ENCODE measurements at regions of chr6 and their contacts with region 1.

Region 1: GRCh38 chr6:36780442-36781177 is 58.6 kb downstream of the CPNE5 start:
- DNase-seq: no peak
- H3K4me3 ChIP-seq: no peak overlapping the region
- H3K4me3 Mint-ChIP-seq: no peak overlapping the region
- H3K27ac ChIP-seq: no peak overlapping the region
- H3K27ac Mint-ChIP-seq: peak overlapping the region in 1 of 7 donors; percentile 31
- H3K4me1 ChIP-seq: no peaks in the 10 kb centered on the region
- H3K4me1 Mint-ChIP-seq: peaks cover 0 to 4% (median 3%) of the 10 kb centered on the region in 4 donors
- H3K27me3 ChIP-seq: no peaks in the 10 kb centered on the region
- H3K27me3 Mint-ChIP-seq: no peaks in the 10 kb centered on the region

Region 2: GRCh38 chr6:36268478-36269275 is 511.9 kb before region 1 on chr6:
- CTCF ChIA-PET with region 1: no interaction called
- POLR2A ChIA-PET with region 1: no interaction called
- intact Hi-C with region 1: no loop called
- DNase-seq: no peak
- H3K4me3 ChIP-seq: no peak overlapping the region
- H3K4me3 Mint-ChIP-seq: no peak overlapping the region
- H3K27ac ChIP-seq: no peak overlapping the region
- H3K27ac Mint-ChIP-seq: peak overlapping the region in 1 of 7 donors; percentile 1
- H3K4me1 ChIP-seq: no peaks in the 10 kb centered on the region
- H3K4me1 Mint-ChIP-seq: no peaks in the 10 kb centered on the region
- H3K27me3 ChIP-seq: no peaks in the 10 kb centered on the region
- H3K27me3 Mint-ChIP-seq: peaks cover 4 to 20% of the 10 kb centered on the region in 2 donors

Region 3: DNA sequence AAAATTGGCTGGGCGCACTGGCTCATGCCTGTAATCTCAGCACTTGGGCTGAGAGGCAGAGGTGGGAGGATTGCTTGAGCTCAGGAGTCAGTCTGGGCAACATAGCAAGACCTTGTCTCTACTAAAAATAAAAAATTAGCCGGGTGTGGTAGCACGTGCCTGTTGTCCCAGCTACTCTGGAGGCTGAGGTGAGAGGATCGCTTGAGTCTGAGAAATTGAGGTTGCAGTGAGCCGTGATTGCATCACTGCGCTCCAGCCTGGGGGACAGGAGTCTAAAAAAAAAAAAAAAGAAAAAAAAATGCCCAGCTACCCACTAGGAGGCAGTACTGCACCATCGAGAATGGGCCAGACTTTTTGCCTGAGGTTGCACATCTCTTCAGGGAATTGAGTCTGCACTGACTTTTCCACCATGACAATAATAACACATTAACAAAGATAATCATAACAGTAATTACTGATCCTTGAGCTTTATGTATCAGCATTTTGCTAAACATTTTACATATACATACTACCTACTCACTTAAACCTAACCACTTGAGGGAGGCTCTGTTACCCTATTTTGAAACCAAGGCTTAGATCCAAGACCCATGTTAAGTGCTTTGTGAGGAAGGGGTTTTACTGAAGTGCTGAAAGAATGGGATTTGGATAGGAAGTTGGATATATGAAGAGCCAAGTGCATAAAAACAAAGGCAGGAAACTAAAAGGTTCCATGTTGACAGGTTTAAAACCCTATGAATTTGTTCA is 165.4 kb before region 1 on chr6:
- CTCF ChIA-PET with region 1: interaction called, 10 read pairs
- POLR2A ChIA-PET with region 1: no interaction called
- intact Hi-C with region 1: no loop called
- DNase-seq: peak; percentile 50 to 67 (median 65)
- H3K4me3 ChIP-seq: no peak overlapping the region
- H3K4me3 Mint-ChIP-seq: no peak overlapping the region
- H3K27ac ChIP-seq: no peak overlapping the region
- H3K27ac Mint-ChIP-seq: peak overlapping the region; percentile 52 to 87 (median 82)
- H3K4me1 ChIP-seq: peaks cover 9% of the 10 kb centered on the region
- H3K4me1 Mint-ChIP-seq: peaks cover 12 to 28% (median 14%) of the 10 kb centered on the region in 4 donors
- H3K27me3 ChIP-seq: no peaks in the 10 kb centered on the region
- H3K27me3 Mint-ChIP-seq: no peaks in the 10 kb centered on the region

Region 4: DNA sequence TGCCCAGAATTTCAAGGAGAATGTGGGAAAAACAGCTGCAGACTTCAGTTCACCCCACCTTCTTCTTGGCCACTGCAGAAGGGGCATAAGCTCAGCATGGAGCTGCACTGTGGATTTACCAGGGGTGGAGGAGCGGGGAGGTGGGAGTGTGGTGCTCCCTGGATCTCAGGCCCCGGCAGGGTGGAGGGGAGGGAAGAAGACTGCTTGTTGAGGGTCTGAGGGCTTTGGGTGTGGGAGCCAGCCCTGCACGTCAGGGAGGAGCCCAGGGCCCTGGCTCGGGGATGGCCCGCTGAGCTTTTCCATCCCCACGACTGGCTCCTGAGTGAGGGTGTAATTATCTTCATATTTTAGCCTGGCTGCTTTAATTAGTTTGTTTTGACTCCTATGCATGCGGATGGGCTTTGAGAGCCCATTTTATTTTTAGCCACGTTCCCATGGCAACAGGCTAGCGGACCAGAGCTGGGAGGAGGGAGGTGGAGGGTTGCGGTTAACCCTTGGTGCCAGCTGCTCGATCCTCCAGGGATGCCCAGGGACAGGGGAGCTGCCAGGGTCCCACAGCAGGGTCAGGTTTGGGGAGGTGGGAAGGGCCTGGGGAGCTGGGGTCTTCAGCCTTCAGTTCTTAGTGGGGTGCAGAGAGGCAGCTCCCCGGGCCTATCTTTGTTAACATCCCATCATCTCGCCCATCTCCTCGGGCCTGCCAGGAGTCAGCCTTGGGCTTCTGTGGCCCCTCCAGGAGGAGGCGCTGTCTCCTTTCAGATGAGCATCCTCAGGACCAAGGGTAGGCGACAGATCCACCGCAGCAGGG is 14.8 kb before region 1 on chr6:
- CTCF ChIA-PET with region 1: interaction called, 230 read pairs
- POLR2A ChIA-PET with region 1: interaction called, 10 read pairs
- intact Hi-C with region 1: loop called (anchors 1 kb)
- DNase-seq: peak; percentile 75 to 80 (median 78)
- H3K4me3 ChIP-seq: no peak overlapping the region
- H3K4me3 Mint-ChIP-seq: peak overlapping the region in 2 of 8 donors; percentile 11 to 28
- H3K27ac ChIP-seq: no peak overlapping the region
- H3K27ac Mint-ChIP-seq: peak overlapping the region in 5 of 7 donors; percentile 11 to 66 (median 50)
- H3K4me1 ChIP-seq: peaks cover 45% of the 10 kb centered on the region
- H3K4me1 Mint-ChIP-seq: peaks cover 27 to 37% (median 31%) of the 10 kb centered on the region in 4 donors
- H3K27me3 ChIP-seq: no peaks in the 10 kb centered on the region
- H3K27me3 Mint-ChIP-seq: no peaks in the 10 kb centered on the region

Region 5: DNA sequence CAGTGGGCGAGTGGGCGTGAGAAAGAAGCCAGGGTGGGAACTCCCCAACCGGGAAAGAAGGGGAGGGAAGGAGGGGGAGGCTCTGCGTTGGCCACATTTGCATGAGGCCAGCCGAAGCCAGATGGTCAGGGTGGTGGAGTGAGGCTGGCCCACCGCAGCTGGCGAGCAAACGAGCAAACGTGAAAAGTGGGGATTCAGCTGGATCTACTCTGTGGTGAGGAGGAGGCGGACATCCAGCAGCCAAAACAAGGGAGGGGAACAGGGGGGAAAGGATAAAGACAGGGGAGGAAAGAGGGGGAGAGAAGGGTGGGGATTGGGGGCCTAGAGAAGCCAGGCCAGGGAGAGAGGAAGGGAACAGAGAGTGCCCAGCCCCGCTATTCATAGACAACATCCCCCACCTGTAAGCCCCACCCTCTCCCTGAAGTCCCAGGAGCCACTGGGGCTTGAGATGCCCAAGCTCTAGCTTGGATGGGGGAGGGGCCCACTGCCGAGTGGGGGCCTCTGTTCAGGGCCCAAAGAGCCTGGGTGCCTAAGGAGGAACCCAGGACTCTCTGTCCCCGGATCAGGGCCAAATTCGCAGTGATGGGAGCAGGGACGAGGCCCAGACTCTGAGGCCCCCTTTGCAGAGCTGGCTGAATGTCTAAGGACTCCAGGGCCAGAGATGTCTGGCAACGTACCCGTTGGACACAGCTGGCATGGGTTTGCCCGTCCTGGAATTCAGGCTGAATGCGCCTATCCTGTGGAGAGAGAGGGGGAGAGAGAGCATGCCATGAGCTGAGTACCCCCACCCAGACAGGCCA is 13.5 kb after region 1 on chr6:
- CTCF ChIA-PET with region 1: interaction called, 19 read pairs
- POLR2A ChIA-PET with region 1: no interaction called
- intact Hi-C with region 1: no loop called
- DNase-seq: no peak
- H3K4me3 ChIP-seq: no peak overlapping the region
- H3K4me3 Mint-ChIP-seq: no peak overlapping the region
- H3K27ac ChIP-seq: no peak overlapping the region
- H3K27ac Mint-ChIP-seq: no peak overlapping the region
- H3K4me1 ChIP-seq: peaks cover 1% of the 10 kb centered on the region
- H3K4me1 Mint-ChIP-seq: peaks cover 0 to 1% (median under 1%) of the 10 kb centered on the region in 4 donors
- H3K27me3 ChIP-seq: peaks cover 4% of the 10 kb centered on the region
- H3K27me3 Mint-ChIP-seq: peaks cover 1 to 8% of the 10 kb centered on the region in 2 donors

Region 6: GRCh38 chr6:37463110-37463509 is 682.5 kb after region 1 on chr6:
- CTCF ChIA-PET with region 1: no interaction called
- POLR2A ChIA-PET with region 1: no interaction called
- intact Hi-C with region 1: no loop called
- DNase-seq: no peak
- H3K4me3 ChIP-seq: no peak overlapping the region
- H3K4me3 Mint-ChIP-seq: no peak overlapping the region
- H3K27ac ChIP-seq: no peak overlapping the region
- H3K27ac Mint-ChIP-seq: peak overlapping the region in 5 of 7 donors; percentile 2 to 60 (median 23)
- H3K4me1 ChIP-seq: no peaks in the 10 kb centered on the region
- H3K4me1 Mint-ChIP-seq: peaks cover 0 to 1% (median 0%) of the 10 kb centered on the region in 4 donors
- H3K27me3 ChIP-seq: no peaks in the 10 kb centered on the region
- H3K27me3 Mint-ChIP-seq: no peaks in the 10 kb centered on the region

Measured in CD4-positive, alpha-beta memory T cell (primary cell).